Activated CD4-positive, alpha-beta memory T cell treated with anti-CD3 and anti-CD28 coated beads for 36 hours (primary cell): ENCODE measurements at regions of chr4 and their contacts with region 1.

Region 1: DNA sequence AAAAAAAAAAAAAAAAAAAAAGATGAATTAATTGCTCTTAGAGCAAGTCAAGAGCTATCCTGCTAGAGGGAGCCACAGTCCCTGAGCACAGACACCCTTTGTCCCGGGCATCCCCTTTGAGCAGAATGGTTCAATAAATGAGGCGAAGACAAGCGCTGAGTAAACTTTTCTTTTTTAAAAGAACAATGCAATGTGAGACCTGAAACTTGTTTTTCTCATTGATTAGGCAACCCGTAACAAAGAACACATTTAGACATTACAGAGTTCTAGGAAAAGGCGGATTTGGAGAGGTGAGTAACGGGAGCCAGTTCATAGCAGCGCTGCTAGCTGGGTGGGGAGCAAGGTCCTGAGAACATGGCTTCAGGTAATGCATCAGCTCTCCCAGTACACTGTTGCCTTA is 46.1 kb downstream of the GRK4 start:
- DNase-seq: peak; percentile 62
- H3K4me3 Mint-ChIP-seq: no peak overlapping the region
- H3K27ac Mint-ChIP-seq: peak overlapping the region; percentile 45
- H3K4me1 Mint-ChIP-seq: peaks cover 25% of the 10 kb centered on the region
- H3K27me3 Mint-ChIP-seq: peaks cover 18% of the 10 kb centered on the region

Region 2: GRCh38 chr4:3021627-3022026 is 12.2 kb after region 1 on chr4:
- CTCF ChIA-PET with region 1: interaction called, 6 read pairs
- POLR2A ChIA-PET with region 1: no interaction called
- intact Hi-C with region 1: loop called (anchors 1 kb)
- DNase-seq: peak; percentile 65
- H3K4me3 Mint-ChIP-seq: no peak overlapping the region
- H3K27ac Mint-ChIP-seq: no peak overlapping the region
- H3K4me1 Mint-ChIP-seq: peaks cover 19% of the 10 kb centered on the region
- H3K27me3 Mint-ChIP-seq: peaks cover 17% of the 10 kb centered on the region

Region 3: DNA sequence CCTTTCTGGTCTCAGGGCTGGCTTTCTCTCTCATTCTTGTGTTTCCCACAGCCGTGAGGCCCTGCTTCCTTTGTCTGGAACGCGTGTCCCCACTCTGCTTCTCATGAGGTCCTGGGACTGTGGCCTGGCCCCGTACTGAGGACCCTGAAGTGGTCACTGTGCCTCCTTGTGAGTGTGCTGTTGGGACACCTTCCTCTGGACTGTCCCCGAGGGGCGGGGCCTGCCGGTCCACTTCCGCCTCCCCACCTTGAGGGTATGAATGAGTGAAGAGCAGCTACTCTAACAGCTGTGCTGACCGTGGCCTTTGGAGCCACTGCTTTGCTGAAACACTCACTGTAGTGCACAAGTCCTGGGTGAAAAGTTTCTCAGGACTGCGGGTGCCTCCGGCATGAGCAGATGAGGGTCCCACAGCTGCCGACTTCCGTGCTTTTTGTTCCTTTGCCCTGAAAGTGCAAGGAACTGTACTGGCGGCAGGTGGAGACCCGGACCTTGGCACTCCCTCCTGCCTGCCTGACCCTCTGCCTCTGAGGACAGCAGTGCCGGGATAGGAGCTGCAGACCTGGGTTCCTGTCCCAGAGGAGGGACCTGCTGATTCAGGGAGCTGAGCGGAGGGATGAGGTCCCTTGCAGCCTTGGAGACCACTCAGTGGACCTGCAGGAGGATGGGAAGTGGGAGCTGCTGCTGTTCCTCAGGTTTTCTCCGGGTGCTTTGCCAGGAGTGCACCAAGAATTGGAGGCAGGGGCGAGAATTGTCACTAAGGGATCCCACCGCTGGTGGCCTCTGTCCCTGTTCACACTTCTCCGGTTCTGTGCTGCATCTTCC is 26.9 kb after region 1 on chr4:
- CTCF ChIA-PET with region 1: interaction called, 16 read pairs
- POLR2A ChIA-PET with region 1: interaction called, 5 read pairs
- intact Hi-C with region 1: loop called (anchors 1 kb)
- DNase-seq: no peak
- H3K4me3 Mint-ChIP-seq: no peak overlapping the region
- H3K27ac Mint-ChIP-seq: no peak overlapping the region
- H3K4me1 Mint-ChIP-seq: peaks cover 23% of the 10 kb centered on the region
- H3K27me3 Mint-ChIP-seq: peaks cover 9% of the 10 kb centered on the region

Region 4: GRCh38 chr4:3041192-3042142 is 32.0 kb after region 1 on chr4:
- CTCF ChIA-PET with region 1: interaction called, 16 read pairs
- POLR2A ChIA-PET with region 1: interaction called, 5 read pairs
- intact Hi-C with region 1: loop called (anchors 1 kb)
- DNase-seq: peak; percentile 62
- H3K4me3 Mint-ChIP-seq: peak overlapping the region; percentile 78
- H3K27ac Mint-ChIP-seq: no peak overlapping the region
- H3K4me1 Mint-ChIP-seq: peaks cover 60% of the 10 kb centered on the region
- H3K27me3 Mint-ChIP-seq: peaks cover 12% of the 10 kb centered on the region

Region 5: DNA sequence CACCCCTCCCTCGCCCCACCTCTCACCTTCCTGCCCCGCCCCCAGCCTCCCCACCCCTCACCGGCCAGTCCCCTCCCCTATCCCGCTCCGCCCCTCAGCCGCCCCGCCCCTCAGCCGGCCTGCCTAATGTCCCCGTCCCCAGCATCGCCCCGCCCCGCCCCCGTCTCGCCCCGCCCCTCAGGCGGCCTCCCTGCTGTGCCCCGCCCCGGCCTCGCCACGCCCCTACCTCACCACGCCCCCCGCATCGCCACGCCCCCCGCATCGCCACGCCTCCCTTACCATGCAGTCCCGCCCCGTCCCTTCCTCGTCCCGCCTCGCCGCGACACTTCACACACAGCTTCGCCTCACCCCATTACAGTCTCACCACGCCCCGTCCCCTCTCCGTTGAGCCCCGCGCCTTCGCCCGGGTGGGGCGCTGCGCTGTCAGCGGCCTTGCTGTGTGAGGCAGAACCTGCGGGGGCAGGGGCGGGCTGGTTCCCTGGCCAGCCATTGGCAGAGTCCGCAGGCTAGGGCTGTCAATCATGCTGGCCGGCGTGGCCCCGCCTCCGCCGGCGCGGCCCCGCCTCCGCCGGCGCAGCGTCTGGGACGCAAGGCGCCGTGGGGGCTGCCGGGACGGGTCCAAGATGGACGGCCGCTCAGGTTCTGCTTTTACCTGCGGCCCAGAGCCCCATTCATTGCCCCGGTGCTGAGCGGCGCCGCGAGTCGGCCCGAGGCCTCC is 64.8 kb after region 1 on chr4 and contains the starts of genes HTT and HTT-AS:
- CTCF ChIA-PET with region 1: no interaction called
- POLR2A ChIA-PET with region 1: no interaction called
- intact Hi-C with region 1: no loop called
- DNase-seq: peak; percentile 98
- H3K4me3 Mint-ChIP-seq: peak within 1 kb of the TSS; percentile 89
- H3K27ac Mint-ChIP-seq: peak within 1 kb of the TSS; percentile 88
- H3K4me1 Mint-ChIP-seq: peaks cover 24% of the 10 kb centered on the region
- H3K27me3 Mint-ChIP-seq: no peaks in the 10 kb centered on the region
- total RNA-seq, gene HTT: 57.6 to 69.8 TPM
- total RNA-seq, gene HTT-AS: not detected

Region 6: DNA sequence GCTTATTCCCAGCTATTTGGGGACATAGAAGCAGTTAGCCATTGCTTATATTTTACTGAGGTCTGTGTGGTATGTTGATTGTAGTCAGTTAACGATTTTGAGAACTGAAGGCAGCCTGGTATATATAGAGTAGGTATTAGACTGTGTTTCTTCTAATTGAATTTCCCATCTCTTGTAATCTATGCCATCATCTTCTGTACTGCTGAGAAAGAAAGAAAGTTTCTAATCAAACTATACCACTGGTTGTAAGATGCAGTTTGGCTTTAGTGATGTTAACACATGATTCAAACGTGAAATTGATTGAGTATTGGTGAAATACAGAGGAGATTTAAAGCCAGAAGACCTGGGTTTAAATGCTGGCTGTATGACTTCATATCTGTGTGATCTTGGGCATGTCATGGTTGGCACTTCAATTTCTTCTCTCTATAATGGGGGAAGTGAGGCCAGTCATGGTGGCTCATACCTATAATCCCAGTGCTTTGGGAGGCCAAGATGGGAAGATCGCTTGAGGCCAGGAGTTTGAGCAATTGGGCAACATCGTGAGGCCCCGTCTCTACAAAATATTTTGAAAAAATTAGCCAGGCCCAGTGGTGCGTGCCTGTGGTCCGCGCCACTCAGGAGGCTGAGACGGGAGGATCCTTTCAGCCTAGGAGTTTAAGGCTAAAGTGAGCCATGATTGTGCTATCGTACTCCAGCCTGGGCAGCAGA is 76.7 kb after region 1 on chr4:
- CTCF ChIA-PET with region 1: no interaction called
- POLR2A ChIA-PET with region 1: interaction called, 7 read pairs
- intact Hi-C with region 1: loop called (anchors 2 kb)
- DNase-seq: no peak
- H3K4me3 Mint-ChIP-seq: peak overlapping the region; percentile 41
- H3K27ac Mint-ChIP-seq: peak overlapping the region; percentile 73
- H3K4me1 Mint-ChIP-seq: peaks cover 56% of the 10 kb centered on the region
- H3K27me3 Mint-ChIP-seq: no peaks in the 10 kb centered on the region

Region 7: GRCh38 chr4:3363411-3364141 is 354.2 kb after region 1 on chr4:
- CTCF ChIA-PET with region 1: no interaction called
- POLR2A ChIA-PET with region 1: no interaction called
- intact Hi-C with region 1: no loop called
- DNase-seq: no peak
- H3K4me3 Mint-ChIP-seq: no peak overlapping the region
- H3K27ac Mint-ChIP-seq: no peak overlapping the region
- H3K4me1 Mint-ChIP-seq: peaks cover 19% of the 10 kb centered on the region
- H3K27me3 Mint-ChIP-seq: no peaks in the 10 kb centered on the region